ENCODE measurements at regions of chr16 and their contacts with region 1.

Region 1: DNA sequence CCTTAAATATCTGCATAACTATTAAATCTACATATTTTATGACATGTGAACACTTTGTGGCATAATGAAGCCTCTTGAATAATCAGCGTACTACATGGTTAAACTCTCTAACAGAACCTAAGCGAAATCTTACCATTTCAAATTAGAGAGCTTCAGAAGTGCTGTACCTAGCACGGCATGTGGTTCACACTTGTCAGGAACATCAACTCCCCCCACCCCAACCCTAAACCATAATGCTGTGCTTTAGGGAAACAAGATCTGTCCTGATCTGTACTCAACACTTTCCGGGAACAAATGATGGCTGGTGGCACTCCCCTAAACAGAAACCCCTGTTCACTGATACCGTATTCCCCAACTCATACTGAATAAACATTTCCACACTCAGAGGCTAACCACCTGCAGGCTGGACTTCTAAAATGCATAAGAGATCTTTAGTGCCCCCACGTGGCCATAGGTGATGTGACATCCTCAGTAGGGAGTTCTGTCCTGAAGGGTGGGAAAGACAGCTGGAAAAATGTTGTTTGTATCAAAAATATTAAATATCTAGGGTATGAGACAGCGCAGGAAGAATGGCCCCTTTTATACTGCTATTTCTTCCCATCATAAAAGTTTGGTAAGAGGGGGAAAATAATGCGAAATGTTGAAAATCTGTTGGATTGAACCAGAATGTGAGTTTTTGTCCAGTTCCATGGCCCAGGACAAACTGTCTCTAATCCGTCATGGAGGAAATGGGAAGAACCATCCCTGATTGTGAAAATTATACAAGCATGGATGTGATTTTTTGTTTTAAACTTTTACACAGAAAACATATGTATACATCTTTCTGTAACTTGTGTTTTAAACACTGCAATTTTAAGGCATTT is 88.6 kb downstream of the USP31 start:
- DNase-seq: peak; percentile 72 to 76 (median 74)
- ATAC-seq: peak; percentile 97
- H3K4me3 ChIP-seq: no peak overlapping the region
- H3K27ac ChIP-seq: no peak overlapping the region
- H3K4me1 ChIP-seq: no peaks in the 10 kb centered on the region
- H3K27me3 ChIP-seq: peaks cover 5 to 19% of the 10 kb centered on the region in 2 experiments; a peak in 3 of 5 replicates
- CTCF ChIP-seq: peak; percentile 82 to 87 (median 83)
- EP300 ChIP-seq: no peak
- POLR2A ChIP-seq: no peak
- RAD21 ChIP-seq: peak; percentile 60 to 73

Region 2: DNA sequence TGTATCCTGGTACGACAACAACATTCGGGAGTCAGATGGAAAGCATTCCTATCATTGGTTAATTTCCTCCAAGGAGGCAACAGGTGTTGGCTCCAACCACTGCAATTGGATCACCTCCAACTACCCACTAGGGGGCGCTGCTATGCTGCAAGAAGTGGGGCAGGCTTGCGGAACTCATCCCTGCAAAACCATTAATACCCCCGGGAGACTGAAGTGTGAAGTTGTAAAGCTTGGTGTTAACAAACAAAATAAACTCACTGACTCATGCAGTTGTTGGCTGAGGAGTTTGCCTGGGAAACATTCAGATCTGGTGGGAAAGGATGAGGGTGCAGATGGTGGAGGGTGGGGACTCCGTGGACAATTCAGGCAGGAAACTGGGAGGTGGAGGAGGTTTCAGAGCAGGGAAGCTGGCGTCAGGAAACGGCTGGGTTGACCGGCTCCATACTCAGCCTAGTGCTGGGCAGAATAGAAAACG is 161.8 kb before region 1 on chr16:
- CTCF ChIA-PET with region 1: no interaction called
- POLR2A ChIA-PET with region 1: no interaction called
- in situ Hi-C with region 1: no loop called
- intact Hi-C with region 1: loop called (anchors 2 kb)
- DNase-seq: peak; percentile 16 to 31 (median 20)
- ATAC-seq: peak; percentile 54; the same call in 2 of the 3 replicates
- H3K4me3 ChIP-seq: no peak overlapping the region
- H3K27ac ChIP-seq: no peak overlapping the region
- H3K4me1 ChIP-seq: no peaks in the 10 kb centered on the region
- H3K27me3 ChIP-seq: peaks cover 0 to 10% of the 10 kb centered on the region in 2 experiments; a peak in 1 of 5 replicates
- CTCF ChIP-seq: peak; percentile 65 to 67 (median 67); a peak in 5 of 6 replicates
- EP300 ChIP-seq: no peak
- POLR2A ChIP-seq: no peak
- RAD21 ChIP-seq: peak; percentile 25 to 58; a peak in 3 of 4 replicates

Measured in K562 (cell line).